Activated CD4-positive, alpha-beta memory T cell treated with anti-CD3 and anti-CD28 coated beads for 36 hours (primary cell): ENCODE measurements at regions of chr2 and their contacts with region 1.

Region 1: DNA sequence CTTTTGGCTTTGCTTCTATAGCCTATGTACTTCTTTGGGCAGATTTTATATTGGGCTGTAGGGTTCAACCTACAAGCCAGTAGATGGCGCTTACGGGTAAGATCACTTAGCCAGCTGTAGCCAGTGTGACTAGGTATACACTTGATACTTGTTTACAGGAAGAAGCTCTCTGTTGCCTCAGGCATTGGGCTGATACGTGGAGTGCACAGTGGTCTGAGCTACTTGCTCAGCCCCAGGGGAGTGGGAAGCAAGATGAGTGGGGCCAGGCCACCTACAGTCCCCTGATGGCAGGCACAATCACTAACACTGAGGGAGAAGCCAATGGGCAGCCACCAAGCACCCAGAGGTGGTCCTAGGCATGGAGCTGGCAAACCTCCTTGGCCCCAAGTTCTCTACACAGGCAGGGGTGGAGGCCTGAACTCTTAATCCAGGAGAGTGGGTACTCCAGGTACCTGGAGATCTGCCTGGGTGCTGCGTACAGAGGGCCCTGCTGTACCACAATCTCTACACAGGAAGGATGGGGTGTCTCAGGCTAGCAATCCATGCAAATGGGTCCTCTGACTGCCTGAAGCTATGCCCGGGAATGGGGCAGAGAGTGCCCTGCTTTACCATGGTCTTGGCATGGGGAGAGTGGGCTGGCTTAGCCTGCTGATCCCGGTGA is 122.2 kb downstream of the NCOA1 start:
- DNase-seq: peak; percentile 42
- H3K4me3 Mint-ChIP-seq: no peak overlapping the region
- H3K27ac Mint-ChIP-seq: no peak overlapping the region
- H3K4me1 Mint-ChIP-seq: peaks cover 19% of the 10 kb centered on the region
- H3K27me3 Mint-ChIP-seq: no peaks in the 10 kb centered on the region

Region 2: GRCh38 chr2:24827321-24828237 is 214.3 kb after region 1 on chr2:
- CTCF ChIA-PET with region 1: interaction called, 9 read pairs
- POLR2A ChIA-PET with region 1: no interaction called
- intact Hi-C with region 1: loop called (anchors 2 kb)
- DNase-seq: peak; percentile 81
- H3K4me3 Mint-ChIP-seq: no peak overlapping the region
- H3K27ac Mint-ChIP-seq: peak overlapping the region; percentile 3
- H3K4me1 Mint-ChIP-seq: peaks cover 25% of the 10 kb centered on the region
- H3K27me3 Mint-ChIP-seq: no peaks in the 10 kb centered on the region